Lower lobe of right lung (tissue), 2 donors: ENCODE measurements at regions of chr5 and their contacts with region 1.

Region 1: GRCh38 chr5:32076699-32077695 is 97.1 kb downstream of the GOLPH3 start:
- DNase-seq: no peak
- ATAC-seq: peak in 1 of 2 donors; percentile 52
- H3K4me3 ChIP-seq: no peak overlapping the region
- H3K27ac ChIP-seq: no peak overlapping the region
- H3K4me1 ChIP-seq: no peaks in the 10 kb centered on the region
- H3K27me3 ChIP-seq: no peaks in the 10 kb centered on the region
- CTCF ChIP-seq: peak; percentile 65

Region 2: DNA sequence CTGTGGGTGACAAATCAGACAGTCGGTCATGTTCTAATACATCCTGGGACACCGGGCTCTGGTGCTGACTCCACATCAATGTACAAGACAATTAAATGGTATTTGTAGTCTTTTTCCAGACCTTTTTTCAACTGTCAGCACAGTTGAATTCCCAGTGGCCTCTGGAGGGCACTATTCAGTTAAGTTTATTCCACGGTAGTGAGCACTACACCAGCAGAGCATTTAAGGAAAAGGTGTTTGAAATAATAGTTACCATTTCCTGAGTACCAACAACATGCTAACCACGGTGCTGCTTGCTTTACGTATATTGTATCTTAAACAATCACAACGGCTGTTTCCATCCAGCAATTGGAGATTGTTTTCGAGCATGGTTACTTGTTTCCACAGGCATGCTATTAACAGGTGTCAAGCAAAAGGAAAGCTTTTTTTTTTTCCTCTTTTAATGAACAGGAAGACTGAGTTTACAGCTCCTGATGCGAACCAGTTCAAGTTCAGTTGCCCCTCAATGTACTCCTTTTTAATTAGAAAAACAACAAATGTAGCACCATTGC is 251.4 kb before region 1 on chr5:
- intact Hi-C with region 1: loop called (anchors 10 kb)
- DNase-seq: no peak
- ATAC-seq: peak; percentile 83 to 92
- H3K4me3 ChIP-seq: no peak overlapping the region
- H3K27ac ChIP-seq: no peak overlapping the region
- H3K4me1 ChIP-seq: no peaks in the 10 kb centered on the region
- H3K27me3 ChIP-seq: no peaks in the 10 kb centered on the region
- CTCF ChIP-seq: peak; percentile 72

Region 3: GRCh38 chr5:32210151-32210550 is 133.2 kb after region 1 on chr5:
- intact Hi-C with region 1: no loop called
- DNase-seq: no peak
- ATAC-seq: no peak
- H3K4me3 ChIP-seq: no peak overlapping the region
- H3K27ac ChIP-seq: no peak overlapping the region
- H3K4me1 ChIP-seq: peaks cover 11% of the 10 kb centered on the region
- H3K27me3 ChIP-seq: no peaks in the 10 kb centered on the region
- CTCF ChIP-seq: no peak

Region 4: GRCh38 chr5:32241034-32241783 is 164.2 kb after region 1 on chr5:
- intact Hi-C with region 1: no loop called
- DNase-seq: no peak
- ATAC-seq: no peak
- H3K4me3 ChIP-seq: no peak overlapping the region
- H3K27ac ChIP-seq: no peak overlapping the region
- H3K4me1 ChIP-seq: no peaks in the 10 kb centered on the region
- H3K27me3 ChIP-seq: no peaks in the 10 kb centered on the region
- CTCF ChIP-seq: no peak